ENCODE measurements at regions of chr7 and their contacts with region 1.

Region 1: GRCh38 chr7:87152107-87152844 is at the start of gene DMTF1:
- DNase-seq: peak; percentile 83
- H3K4me3 Mint-ChIP-seq: peak within 1 kb of the TSS; percentile 95
- H3K27ac Mint-ChIP-seq: peak within 1 kb of the TSS; percentile 99
- H3K4me1 Mint-ChIP-seq: peaks cover 47% of the 10 kb centered on the region
- H3K27me3 Mint-ChIP-seq: no peaks in the 10 kb centered on the region
- total RNA-seq, gene DMTF1: 103 and 116 TPM in 2 replicates

Region 2: DNA sequence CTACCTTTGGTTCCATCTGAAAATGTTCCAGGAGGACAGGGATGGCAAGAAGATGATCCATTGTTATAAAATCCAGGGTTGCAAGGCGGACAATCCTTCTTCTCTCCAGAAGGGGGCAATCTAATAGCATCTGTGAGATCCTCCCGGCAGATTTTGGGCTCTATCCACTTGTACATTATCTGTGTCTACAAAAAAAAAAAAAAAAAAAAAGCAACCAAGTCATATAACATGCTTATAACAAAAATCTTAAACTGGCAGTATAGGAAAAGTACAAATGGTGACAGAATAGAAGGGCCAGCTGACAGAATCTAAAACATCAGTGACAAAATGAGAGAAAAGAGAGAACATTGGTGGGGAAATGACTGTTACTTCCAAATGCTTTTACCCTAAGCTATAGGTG is 225.5 kb before region 1 on chr7:
- intact Hi-C with region 1: loop called (anchors 1 kb)
- DNase-seq: no peak
- H3K4me3 Mint-ChIP-seq: no peak overlapping the region
- H3K27ac Mint-ChIP-seq: no peak overlapping the region
- H3K4me1 Mint-ChIP-seq: no peaks in the 10 kb centered on the region
- H3K27me3 Mint-ChIP-seq: peaks cover 6% of the 10 kb centered on the region

Region 3: GRCh38 chr7:87059525-87060287 is 92.6 kb before region 1 on chr7 and contains the start of gene ELAPOR2:
- intact Hi-C with region 1: loop called (anchors 1 kb)
- DNase-seq: peak; percentile 70
- H3K4me3 Mint-ChIP-seq: peak within 1 kb of the TSS; percentile 70
- H3K27ac Mint-ChIP-seq: peak within 1 kb of the TSS; percentile 20
- H3K4me1 Mint-ChIP-seq: peaks cover 8% of the 10 kb centered on the region
- H3K27me3 Mint-ChIP-seq: peaks cover 17% of the 10 kb centered on the region
- total RNA-seq, gene ELAPOR2: 1.3 and 2.3 TPM in 2 replicates

Region 4: DNA sequence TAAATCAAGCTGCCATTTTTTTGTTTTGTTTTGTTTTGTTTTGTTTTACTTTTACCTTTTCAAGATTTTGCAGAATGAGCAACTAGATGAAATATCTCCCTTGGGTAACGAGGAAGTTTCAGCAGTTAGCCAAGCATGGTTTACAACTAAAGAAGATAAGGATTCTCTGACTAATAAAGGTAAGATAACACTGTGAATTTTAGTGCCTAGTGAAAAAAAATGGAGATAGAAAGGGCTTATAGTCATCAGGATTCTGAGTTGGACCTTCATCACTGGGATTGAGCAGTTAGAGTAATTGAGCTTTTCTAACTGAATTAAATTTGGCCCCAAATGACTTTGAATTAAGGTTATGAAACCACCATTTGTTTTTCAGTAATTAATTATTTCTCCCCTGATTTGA is 21.2 kb after region 1 on chr7:
- intact Hi-C with region 1: loop called (anchors 2 kb)
- DNase-seq: no peak
- H3K4me3 Mint-ChIP-seq: no peak overlapping the region
- H3K27ac Mint-ChIP-seq: no peak overlapping the region
- H3K4me1 Mint-ChIP-seq: peaks cover 18% of the 10 kb centered on the region
- H3K27me3 Mint-ChIP-seq: no peaks in the 10 kb centered on the region

Region 5: GRCh38 chr7:87219545-87220025 is 67.3 kb after region 1 on chr7 and contains the start of gene TMEM243:
- intact Hi-C with region 1: loop called (anchors 1 kb)
- DNase-seq: peak; percentile 79
- H3K4me3 Mint-ChIP-seq: peak within 1 kb of the TSS; percentile 100
- H3K27ac Mint-ChIP-seq: peak within 1 kb of the TSS; percentile 96
- H3K4me1 Mint-ChIP-seq: peaks cover 45% of the 10 kb centered on the region
- H3K27me3 Mint-ChIP-seq: peaks cover 11% of the 10 kb centered on the region
- total RNA-seq, gene TMEM243: 49.2 and 50.5 TPM in 2 replicates

Region 6: DNA sequence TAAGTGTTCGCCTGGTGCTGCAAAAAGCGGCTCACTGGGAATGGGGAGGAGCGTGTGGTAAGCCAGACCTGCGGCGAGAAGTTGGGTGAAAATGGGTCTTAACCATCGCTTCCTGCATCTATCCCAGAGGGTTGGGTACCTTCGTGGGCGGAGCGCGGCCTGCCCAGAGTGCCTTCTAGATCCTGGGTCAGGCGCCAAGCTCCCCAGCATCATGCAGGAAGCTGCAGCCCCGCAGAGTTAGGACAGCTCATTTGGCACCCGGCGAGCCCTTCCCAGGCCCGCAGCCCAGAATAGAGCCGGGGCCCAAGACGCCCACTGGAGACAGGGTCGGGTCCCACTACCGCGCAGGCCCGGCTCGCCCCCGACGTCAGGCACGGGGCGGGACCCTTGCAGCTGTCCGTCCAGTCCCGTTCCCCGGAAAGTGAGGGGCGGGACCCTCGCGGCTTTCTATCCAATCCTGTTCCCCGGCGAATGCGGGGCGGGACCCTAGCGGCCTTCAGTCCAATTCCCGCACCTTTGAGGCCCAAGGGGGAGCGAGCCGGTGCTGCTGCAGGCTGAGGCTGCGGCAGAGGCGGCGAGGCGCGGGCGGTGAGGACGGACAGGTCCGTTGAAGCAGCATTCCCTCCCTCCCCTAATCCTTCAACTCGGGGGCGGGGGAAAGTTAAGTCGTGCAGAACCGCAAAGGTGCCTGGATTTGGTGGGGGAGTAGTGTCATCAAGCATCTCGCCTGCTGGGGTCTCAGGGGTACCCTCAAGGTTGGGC is 193.1 kb after region 1 on chr7 and contains the start of gene CROT:
- intact Hi-C with region 1: loop called (anchors 1 kb)
- DNase-seq: peak; percentile 93
- H3K4me3 Mint-ChIP-seq: peak within 1 kb of the TSS; percentile 92
- H3K27ac Mint-ChIP-seq: peak within 1 kb of the TSS; percentile 89
- H3K4me1 Mint-ChIP-seq: peaks cover 57% of the 10 kb centered on the region
- H3K27me3 Mint-ChIP-seq: peaks cover 1% of the 10 kb centered on the region
- total RNA-seq, gene CROT: 5.9 and 6.5 TPM in 2 replicates

Region 7: DNA sequence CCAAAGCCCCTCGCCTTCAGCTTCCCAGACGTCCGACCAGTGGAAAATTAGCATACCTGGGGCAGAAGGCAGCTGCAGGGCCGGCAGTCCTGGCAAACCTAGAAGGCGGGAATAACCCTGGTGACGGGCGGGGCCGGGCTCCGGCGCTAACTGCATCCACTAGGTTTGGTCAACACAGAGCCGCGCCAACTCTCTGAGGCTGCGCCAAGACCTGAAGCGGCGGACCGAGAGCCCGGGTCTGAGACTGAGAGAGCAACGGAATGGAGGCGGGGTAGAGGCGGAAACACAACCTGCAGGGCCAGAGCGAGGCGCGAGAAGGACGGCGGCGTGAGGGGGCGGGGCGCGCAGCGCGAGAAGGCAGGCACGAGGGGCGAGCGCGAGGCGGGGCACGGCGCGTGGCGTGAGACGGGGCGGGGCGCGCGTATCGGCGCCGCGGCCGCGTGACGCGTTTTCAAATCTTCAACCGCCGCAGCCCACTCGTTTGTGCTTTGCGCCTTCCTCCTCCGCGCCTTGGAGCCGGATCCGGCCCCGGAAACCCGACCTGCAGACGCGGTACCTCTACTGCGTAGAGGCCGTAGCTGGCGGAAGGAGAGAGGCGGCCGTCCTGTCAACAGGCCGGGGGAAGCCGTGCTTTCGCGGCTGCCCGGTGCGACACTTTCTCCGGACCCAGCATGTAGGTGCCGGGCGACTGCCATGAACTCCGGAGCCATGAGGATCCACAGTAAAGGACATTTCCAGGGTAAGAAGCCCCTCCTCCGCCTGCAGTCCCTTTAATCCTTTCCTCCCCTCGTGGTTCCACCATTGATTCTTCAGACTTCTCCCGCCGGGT is 724.0 kb after region 1 on chr7 and contains the starts of genes DBF4 and SLC25A40:
- intact Hi-C with region 1: loop called (anchors 5 kb)
- DNase-seq: peak; percentile 95
- H3K4me3 Mint-ChIP-seq: peak within 1 kb of the TSS; percentile 80
- H3K27ac Mint-ChIP-seq: peak within 1 kb of the TSS; percentile 98
- H3K4me1 Mint-ChIP-seq: peaks cover 54% of the 10 kb centered on the region
- H3K27me3 Mint-ChIP-seq: no peaks in the 10 kb centered on the region
- total RNA-seq, gene DBF4: 68.6 and 76.6 TPM in 2 replicates
- total RNA-seq, gene SLC25A40: 41.9 and 51.4 TPM in 2 replicates